ENCODE measurements at regions of chr6 and their contacts with region 1.

Region 1: GRCh38 chr6:28281288-28282064 is at the start of gene PGBD1:
- DNase-seq: peak; percentile 44
- H3K4me3 ChIP-seq: peak within 1 kb of the TSS; percentile 86
- H3K27ac ChIP-seq: peak within 1 kb of the TSS; percentile 57
- H3K27me3 ChIP-seq: no peaks in the 10 kb centered on the region
- CTCF ChIP-seq: no peak
- polyA plus RNA-seq, gene PGBD1: 5.6 and 7.2 TPM in 2 replicates

Region 2: DNA sequence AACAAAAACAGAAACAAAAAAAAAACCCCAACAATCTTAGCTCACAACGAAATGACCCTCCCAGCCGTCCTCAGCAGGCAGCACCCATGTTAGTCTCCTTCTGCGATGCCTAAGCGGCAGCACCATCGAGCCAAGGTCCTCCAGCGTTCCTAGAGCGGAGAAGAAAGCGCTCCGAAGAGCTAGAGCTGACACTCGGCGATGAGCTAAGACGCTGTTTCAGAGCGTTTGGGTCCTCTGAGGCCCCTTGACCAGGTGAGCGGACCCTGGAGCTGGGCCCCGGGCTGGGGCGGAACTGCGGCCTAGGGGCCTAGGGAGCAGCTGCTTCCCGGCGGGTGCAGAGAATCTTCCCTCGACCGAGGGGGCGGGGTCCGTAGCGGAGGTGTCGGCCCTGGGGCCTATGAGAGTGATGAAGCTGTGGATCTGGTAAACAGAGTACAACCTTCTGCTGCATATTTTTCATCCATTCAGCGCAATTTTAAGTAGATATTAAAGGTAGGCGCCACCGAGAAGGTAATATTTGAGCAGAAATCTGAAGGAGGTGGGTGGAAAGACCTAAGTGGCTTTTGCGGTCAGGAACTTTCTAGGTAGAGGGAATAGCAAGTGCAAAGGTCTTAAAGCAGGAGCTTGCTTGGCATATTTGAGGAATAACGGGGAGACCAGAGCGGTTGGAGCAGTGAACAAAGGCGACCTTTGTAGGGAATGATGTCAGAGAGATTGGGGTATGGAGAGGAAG is 14.3 kb before region 1 on chr6 and contains the start of gene ZSCAN26:
- CTCF ChIA-PET with region 1: interaction called, 4 read pairs
- POLR2A ChIA-PET with region 1: interaction called, 10 read pairs
- DNase-seq: peak; percentile 82
- H3K4me3 ChIP-seq: peak within 1 kb of the TSS; percentile 75
- H3K27ac ChIP-seq: peak within 1 kb of the TSS; percentile 88
- H3K27me3 ChIP-seq: no peaks in the 10 kb centered on the region
- CTCF ChIP-seq: no peak
- polyA plus RNA-seq, gene ZSCAN26: 17.9 and 24.0 TPM in 2 replicates

Region 3: DNA sequence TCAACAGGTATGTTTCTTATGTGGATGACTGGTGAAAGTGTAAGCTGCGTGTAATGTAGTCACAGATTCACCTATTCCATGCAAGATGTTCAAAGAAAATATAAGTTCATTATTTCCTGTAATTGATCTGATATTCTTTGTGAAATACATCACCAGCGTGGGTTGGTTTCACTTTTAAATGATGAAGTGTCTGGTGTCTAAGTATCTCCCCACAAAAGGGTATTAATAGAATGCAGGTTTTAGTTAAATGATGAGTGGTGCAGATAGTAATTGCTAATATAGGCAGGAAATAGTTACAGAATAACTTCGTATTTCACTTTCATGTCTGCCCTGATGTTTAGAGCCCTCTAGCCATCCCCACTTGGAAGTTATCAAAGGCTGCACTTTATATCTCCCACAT is 22.1 kb after region 1 on chr6:
- CTCF ChIA-PET with region 1: no interaction called
- POLR2A ChIA-PET with region 1: no interaction called
- DNase-seq: no peak
- H3K4me3 ChIP-seq: no peak overlapping the region
- H3K27ac ChIP-seq: no peak overlapping the region
- H3K27me3 ChIP-seq: no peaks in the 10 kb centered on the region
- CTCF ChIP-seq: no peak

Measured in AG04450 (cell line).